ENCODE measurements at regions of chr20 and their contacts with region 1.

Region 1: DNA sequence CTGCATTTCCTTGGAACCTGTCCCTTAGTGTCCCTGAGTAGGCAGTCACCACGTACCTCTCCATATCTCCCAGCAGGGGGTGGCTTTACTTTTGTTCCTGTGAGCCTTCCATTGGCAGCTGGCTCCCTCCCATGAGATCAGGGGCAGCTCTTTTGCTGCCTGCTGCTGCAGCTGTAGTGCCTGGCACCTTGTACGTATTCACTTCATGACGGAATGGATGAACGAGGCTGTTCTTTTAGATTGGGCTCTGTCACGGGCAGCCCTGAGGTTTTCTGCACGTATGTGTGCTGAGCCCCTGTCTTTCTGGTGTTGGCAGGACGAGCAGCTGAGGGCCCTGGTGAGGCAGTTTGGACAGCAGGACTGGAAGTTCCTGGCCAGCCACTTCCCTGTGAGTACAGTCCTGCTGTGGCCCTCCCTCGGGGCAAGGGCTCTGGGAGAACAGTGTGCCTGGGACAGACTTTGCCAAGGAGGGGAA is 14.6 kb downstream of the MYBL2 start:
- DNase-seq: peak in 3 of 35 experiments; percentile 12 to 27 (median 23)
- ATAC-seq: no peak
- H3K4me3 ChIP-seq: no peak overlapping the region
- H3K4me3 Mint-ChIP-seq: no peak overlapping the region
- H3K27ac ChIP-seq: peak overlapping the region; percentile 47
- H3K27ac Mint-ChIP-seq: no peak overlapping the region
- H3K4me1 ChIP-seq: peaks cover 0 to 5% of the 10 kb centered on the region in 2 experiments
- H3K4me1 Mint-ChIP-seq: peaks cover 0 to 6% (median 2%) of the 10 kb centered on the region in 3 donors
- H3K27me3 ChIP-seq: no peaks in the 10 kb centered on the region
- H3K27me3 Mint-ChIP-seq: peaks cover 0 to 3% of the 10 kb centered on the region in 2 donors

Region 2: GRCh38 chr20:43472671-43473380 is 208.7 kb before region 1 on chr20:
- CTCF ChIA-PET with region 1: no interaction called
- POLR2A ChIA-PET with region 1: interaction called in 1 of 2 experiments, 10 read pairs
- DNase-seq: no peak
- ATAC-seq: no peak
- H3K4me3 ChIP-seq: no peak overlapping the region
- H3K4me3 Mint-ChIP-seq: no peak overlapping the region
- H3K27ac ChIP-seq: no peak overlapping the region
- H3K27ac Mint-ChIP-seq: no peak overlapping the region
- H3K4me1 ChIP-seq: peaks cover 0 to 2% of the 10 kb centered on the region in 2 experiments
- H3K4me1 Mint-ChIP-seq: peaks cover 6 to 24% (median 10%) of the 10 kb centered on the region in 3 donors
- H3K27me3 ChIP-seq: no peaks in the 10 kb centered on the region
- H3K27me3 Mint-ChIP-seq: no peaks in the 10 kb centered on the region

Region 3: GRCh38 chr20:43514062-43514999 is 167.2 kb before region 1 on chr20:
- CTCF ChIA-PET with region 1: no interaction called
- POLR2A ChIA-PET with region 1: no interaction called
- DNase-seq: peak; percentile 75 to 97 (median 90)
- ATAC-seq: peak; percentile 87 to 91 (median 88)
- H3K4me3 ChIP-seq: peak overlapping the region; percentile 62 to 75
- H3K4me3 Mint-ChIP-seq: peak overlapping the region; percentile 91 to 99 (median 91)
- H3K27ac ChIP-seq: peak overlapping the region; percentile 52
- H3K27ac Mint-ChIP-seq: peak overlapping the region; percentile 81 to 87
- H3K4me1 ChIP-seq: peaks cover 0 to 22% of the 10 kb centered on the region in 2 experiments
- H3K4me1 Mint-ChIP-seq: peaks cover 16 to 23% (median 19%) of the 10 kb centered on the region in 3 donors
- H3K27me3 ChIP-seq: peaks cover 0 to 3% of the 10 kb centered on the region in 2 experiments
- H3K27me3 Mint-ChIP-seq: peaks cover 0 to 6% of the 10 kb centered on the region in 2 donors

Region 4: GRCh38 chr20:43721429-43722152 is 40.1 kb after region 1 on chr20:
- CTCF ChIA-PET with region 1: no interaction called
- POLR2A ChIA-PET with region 1: no interaction called
- DNase-seq: no peak
- ATAC-seq: peak in 1 of 4 experiments; percentile 75
- H3K4me3 ChIP-seq: peak overlapping the region; percentile 29 to 48
- H3K4me3 Mint-ChIP-seq: peak overlapping the region; percentile 62 to 70 (median 64)
- H3K27ac ChIP-seq: peak overlapping the region; percentile 33
- H3K27ac Mint-ChIP-seq: peak overlapping the region; percentile 75 to 83
- H3K4me1 ChIP-seq: peaks cover 33 to 53% of the 10 kb centered on the region in 2 experiments
- H3K4me1 Mint-ChIP-seq: peaks cover 58 to 71% (median 61%) of the 10 kb centered on the region in 3 donors
- H3K27me3 ChIP-seq: no peaks in the 10 kb centered on the region
- H3K27me3 Mint-ChIP-seq: no peaks in the 10 kb centered on the region

Region 5: GRCh38 chr20:43736588-43737158 is 55.2 kb after region 1 on chr20:
- CTCF ChIA-PET with region 1: no interaction called
- POLR2A ChIA-PET with region 1: interaction called in 1 of 2 experiments, 10 read pairs
- DNase-seq: peak in 1 of 35 experiments; percentile 38
- ATAC-seq: no peak
- H3K4me3 ChIP-seq: no peak overlapping the region
- H3K4me3 Mint-ChIP-seq: no peak overlapping the region
- H3K27ac ChIP-seq: no peak overlapping the region
- H3K27ac Mint-ChIP-seq: no peak overlapping the region
- H3K4me1 ChIP-seq: peaks cover 4 to 13% of the 10 kb centered on the region in 2 experiments
- H3K4me1 Mint-ChIP-seq: peaks cover 16 to 27% (median 25%) of the 10 kb centered on the region in 3 donors
- H3K27me3 ChIP-seq: peaks cover 0 to 3% of the 10 kb centered on the region in 2 experiments
- H3K27me3 Mint-ChIP-seq: no peaks in the 10 kb centered on the region

Region 6: GRCh38 chr20:43855803-43856202 is 174.3 kb after region 1 on chr20:
- CTCF ChIA-PET with region 1: interaction called in 1 of 2 experiments, 17 read pairs
- POLR2A ChIA-PET with region 1: no interaction called
- DNase-seq: no peak
- ATAC-seq: no peak
- H3K4me3 ChIP-seq: no peak overlapping the region
- H3K4me3 Mint-ChIP-seq: no peak overlapping the region
- H3K27ac ChIP-seq: no peak overlapping the region
- H3K27ac Mint-ChIP-seq: no peak overlapping the region
- H3K4me1 ChIP-seq: no peaks in the 10 kb centered on the region
- H3K4me1 Mint-ChIP-seq: no peaks in the 10 kb centered on the region
- H3K27me3 ChIP-seq: peaks cover 0 to 7% of the 10 kb centered on the region in 2 experiments
- H3K27me3 Mint-ChIP-seq: peaks cover 0 to 5% of the 10 kb centered on the region in 2 donors